Posterior vena cava (tissue), 2 donors: ENCODE measurements at regions of chr3 and their contacts with region 1.

Region 1: DNA sequence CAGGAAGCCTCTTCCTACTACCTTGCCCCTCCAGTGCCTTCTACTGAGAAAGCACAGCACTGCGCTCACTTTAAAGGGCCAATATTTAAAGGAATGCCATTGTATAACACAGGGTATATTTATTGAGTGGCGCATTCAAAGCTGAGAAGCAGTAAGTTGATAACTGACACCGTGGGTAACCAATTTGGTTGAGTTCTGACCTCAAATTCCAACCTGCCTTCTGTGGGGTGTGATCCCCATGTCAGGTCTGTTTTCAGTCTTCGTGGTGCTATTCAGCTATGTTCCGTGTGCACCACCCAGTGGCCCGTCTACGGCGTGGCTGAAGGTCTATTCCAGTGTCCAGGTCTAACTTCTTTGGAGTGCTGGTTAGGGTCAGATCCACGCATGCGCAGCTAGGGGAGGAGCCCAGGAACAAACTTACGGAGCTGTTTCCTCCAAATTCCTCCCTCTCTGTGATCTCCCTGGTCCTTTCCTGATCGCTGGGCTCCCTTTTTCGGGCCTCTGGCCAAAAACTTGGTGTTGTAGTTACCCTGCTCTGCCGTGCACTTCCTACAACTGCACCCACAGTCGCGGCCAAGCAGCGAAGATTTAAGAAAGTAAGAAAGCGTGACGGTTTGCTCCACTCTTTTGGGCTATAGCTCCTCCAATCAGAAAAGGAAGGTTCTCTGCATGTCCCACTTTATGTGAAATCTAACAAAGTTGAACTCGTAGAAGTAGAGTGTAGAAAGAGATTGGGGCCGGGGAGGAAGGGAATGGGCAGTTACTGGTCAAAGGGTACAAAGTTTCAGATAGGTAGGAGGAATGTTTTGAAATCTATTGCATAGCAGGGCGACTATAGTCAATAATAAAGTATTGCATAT is 7.7 kb downstream of the LRRC2 start:
- DNase-seq: peak; percentile 90

Region 2: GRCh38 chr3:46578973-46579755 is 20.8 kb after region 1 on chr3:
- intact Hi-C with region 1: loop called in 1 of 2 experiments (anchors 1 kb)
- DNase-seq: no peak